ENCODE measurements at regions of chr6 and their contacts with region 1.

Region 1: GRCh38 chr6:11232193-11232769 is at the start of gene NEDD9:
- DNase-seq: peak; percentile 87 to 97 (median 91)
- ATAC-seq: peak; percentile 94
- H3K4me3 ChIP-seq: peak within 1 kb of the TSS; percentile 62 to 70
- H3K4me3 Mint-ChIP-seq: peak within 1 kb of the TSS; percentile 94
- H3K27ac ChIP-seq: peak within 1 kb of the TSS; percentile 76 to 96
- H3K27ac Mint-ChIP-seq: peak within 1 kb of the TSS; percentile 99
- H3K4me1 ChIP-seq: peaks cover 25% of the 10 kb centered on the region
- H3K4me1 Mint-ChIP-seq: peaks cover 61% of the 10 kb centered on the region
- H3K27me3 ChIP-seq: no peaks in the 10 kb centered on the region
- H3K27me3 Mint-ChIP-seq: no peaks in the 10 kb centered on the region
- CTCF ChIP-seq: no peak
- total RNA-seq, gene NEDD9: 41.2 to 44.2 TPM

Region 2: GRCh38 chr6:11194356-11195218 is 37.7 kb before region 1 on chr6:
- CTCF ChIA-PET with region 1: interaction called, 3 read pairs
- POLR2A ChIA-PET with region 1: no interaction called
- intact Hi-C with region 1: loop called (anchors 5 kb)
- DNase-seq: no peak
- ATAC-seq: no peak
- H3K4me3 ChIP-seq: no peak overlapping the region
- H3K4me3 Mint-ChIP-seq: no peak overlapping the region
- H3K27ac ChIP-seq: no peak overlapping the region
- H3K27ac Mint-ChIP-seq: no peak overlapping the region
- H3K4me1 ChIP-seq: peaks cover 8% of the 10 kb centered on the region
- H3K4me1 Mint-ChIP-seq: peaks cover 26% of the 10 kb centered on the region
- H3K27me3 ChIP-seq: no peaks in the 10 kb centered on the region
- H3K27me3 Mint-ChIP-seq: no peaks in the 10 kb centered on the region
- CTCF ChIP-seq: no peak

Region 3: GRCh38 chr6:11317885-11318771 is 85.8 kb after region 1 on chr6:
- CTCF ChIA-PET with region 1: no interaction called
- POLR2A ChIA-PET with region 1: no interaction called
- intact Hi-C with region 1: loop called (anchors 1 to 5 kb)
- DNase-seq: peak; percentile 17 to 87 (median 62)
- ATAC-seq: peak; percentile 89
- H3K4me3 ChIP-seq: no peak overlapping the region
- H3K4me3 Mint-ChIP-seq: no peak overlapping the region
- H3K27ac ChIP-seq: peak overlapping the region in 1 of 2 experiments; percentile 67
- H3K27ac Mint-ChIP-seq: peak overlapping the region; percentile 72
- H3K4me1 ChIP-seq: no peaks in the 10 kb centered on the region
- H3K4me1 Mint-ChIP-seq: peaks cover 31% of the 10 kb centered on the region
- H3K27me3 ChIP-seq: no peaks in the 10 kb centered on the region
- H3K27me3 Mint-ChIP-seq: no peaks in the 10 kb centered on the region
- CTCF ChIP-seq: no peak

Region 4: GRCh38 chr6:11381801-11382513 is 149.7 kb after region 1 on chr6:
- CTCF ChIA-PET with region 1: no interaction called
- POLR2A ChIA-PET with region 1: interaction called, 14 read pairs
- intact Hi-C with region 1: loop called (anchors 1 kb)
- DNase-seq: peak; percentile 45 to 92 (median 67)
- ATAC-seq: peak; percentile 92
- H3K4me3 ChIP-seq: peak overlapping the region; percentile 66 to 67
- H3K4me3 Mint-ChIP-seq: peak overlapping the region; percentile 91
- H3K27ac ChIP-seq: peak overlapping the region; percentile 79 to 87
- H3K27ac Mint-ChIP-seq: peak overlapping the region; percentile 90
- H3K4me1 ChIP-seq: peaks cover 30% of the 10 kb centered on the region
- H3K4me1 Mint-ChIP-seq: peaks cover 62% of the 10 kb centered on the region
- H3K27me3 ChIP-seq: no peaks in the 10 kb centered on the region
- H3K27me3 Mint-ChIP-seq: no peaks in the 10 kb centered on the region
- CTCF ChIP-seq: no peak

Region 5: DNA sequence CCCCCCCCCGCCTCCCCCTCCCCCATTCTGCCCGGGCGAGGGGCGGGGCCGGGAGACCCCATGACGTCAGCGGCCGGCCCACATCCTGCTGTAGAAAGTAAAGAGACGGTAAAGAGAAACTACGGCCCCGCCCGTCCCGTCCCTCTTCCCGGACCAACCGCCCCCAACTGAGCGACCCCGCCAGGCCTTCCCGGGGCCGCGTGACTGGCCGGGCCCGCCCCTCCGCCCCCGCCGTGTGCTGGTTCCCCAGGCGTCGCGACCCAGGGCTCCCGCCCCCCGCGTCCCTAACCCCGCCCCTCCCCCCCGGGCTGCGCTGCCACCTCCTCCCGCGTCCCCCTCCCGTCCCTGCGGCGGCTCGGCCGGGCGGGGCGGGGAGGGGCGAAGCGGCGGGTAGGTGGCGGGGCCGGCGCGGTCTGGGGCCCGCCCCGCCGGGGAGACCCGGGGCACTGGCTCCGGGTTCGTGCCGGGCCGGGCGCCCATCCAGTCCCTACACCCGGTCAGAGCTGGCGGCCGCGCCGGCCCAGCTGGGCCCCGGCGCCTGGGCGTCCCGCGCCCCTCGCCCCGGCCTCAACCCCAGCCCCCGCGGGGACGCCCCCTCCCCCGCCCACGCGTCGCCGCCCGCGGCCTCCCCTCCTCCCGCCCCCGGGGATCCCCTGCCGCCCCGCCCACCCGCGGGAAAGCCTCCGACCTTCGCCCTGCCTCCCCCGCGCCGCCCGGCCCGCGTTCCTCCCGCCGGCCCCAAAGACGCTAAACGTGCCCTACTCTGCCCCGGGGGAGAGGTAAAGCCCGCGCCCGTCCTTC is 779.2 kb after region 1 on chr6:
- CTCF ChIA-PET with region 1: no interaction called
- POLR2A ChIA-PET with region 1: no interaction called
- intact Hi-C with region 1: loop called (anchors 5 to 10 kb)
- DNase-seq: peak; percentile 92 to 99 (median 96)
- ATAC-seq: peak; percentile 71
- H3K4me3 ChIP-seq: peak overlapping the region in 1 of 2 experiments; percentile 73
- H3K4me3 Mint-ChIP-seq: peak overlapping the region; percentile 91
- H3K27ac ChIP-seq: peak overlapping the region in 1 of 2 experiments; percentile 93
- H3K27ac Mint-ChIP-seq: peak overlapping the region; percentile 94
- H3K4me1 ChIP-seq: peaks cover 28% of the 10 kb centered on the region
- H3K4me1 Mint-ChIP-seq: peaks cover 60% of the 10 kb centered on the region
- H3K27me3 ChIP-seq: no peaks in the 10 kb centered on the region
- H3K27me3 Mint-ChIP-seq: no peaks in the 10 kb centered on the region
- CTCF ChIP-seq: no peak

Measured in CD8-positive, alpha-beta T cell (primary cell).